ENCODE measurements at regions of chr5 and their contacts with region 1.

Region 1: GRCh38 chr5:159106569-159107282 is 7.0 kb upstream of the EBF1 start:
- DNase-seq: peak; percentile 40 to 73 (median 60)
- ATAC-seq: peak; percentile 80
- H3K4me3 ChIP-seq: peak overlapping the region; percentile 56
- H3K4me3 Mint-ChIP-seq: peak overlapping the region; percentile 76 to 95 (median 88)
- H3K27ac ChIP-seq: no peak overlapping the region
- H3K27ac Mint-ChIP-seq: peak overlapping the region in 2 of 9 donors; percentile 36 to 61
- H3K4me1 ChIP-seq: peaks cover 0 to 16% of the 10 kb centered on the region in 2 donors
- H3K4me1 Mint-ChIP-seq: peaks cover 8 to 28% (median 24%) of the 10 kb centered on the region in 7 donors
- H3K27me3 ChIP-seq: peaks cover 6 to 26% of the 10 kb centered on the region in 2 donors
- H3K27me3 Mint-ChIP-seq: peaks cover 48 to 80% (median 60%) of the 10 kb centered on the region in 5 donors

Region 2: DNA sequence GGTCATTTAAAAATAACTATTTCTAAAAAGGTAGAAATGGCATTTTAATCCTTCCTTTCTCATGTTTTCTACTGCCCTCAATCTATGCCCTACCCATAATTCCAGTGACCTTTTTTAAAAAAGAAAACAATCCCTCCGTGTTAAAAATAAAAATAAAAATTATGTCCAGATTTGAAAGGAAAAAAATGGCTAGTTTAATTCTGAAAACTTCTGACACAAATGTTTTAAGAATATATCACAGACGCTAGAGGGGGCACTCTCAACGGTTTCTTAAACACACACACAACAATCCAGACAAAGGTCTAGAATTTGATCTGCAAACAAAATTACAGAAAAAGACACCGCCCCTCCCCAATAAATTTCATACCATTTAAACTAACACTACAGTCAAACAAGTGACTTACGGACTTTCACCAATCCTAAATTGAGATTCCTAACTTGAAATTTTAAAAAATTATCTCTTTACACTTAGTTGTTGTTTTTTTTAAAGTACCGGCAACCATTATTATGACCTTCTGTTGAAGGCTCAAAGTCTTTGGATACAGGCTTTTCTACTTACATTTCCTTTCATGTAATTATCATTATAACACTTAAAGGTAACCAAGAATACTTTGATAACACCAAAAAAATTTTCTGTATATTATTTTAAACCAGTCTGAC is 1286.0 kb before region 1 on chr5:
- CTCF ChIA-PET with region 1: no interaction called
- POLR2A ChIA-PET with region 1: no interaction called
- intact Hi-C with region 1: loop called in 1 of 2 experiments (anchors 2 kb)
- DNase-seq: peak in 7 of 9 donors; percentile 5 to 45 (median 32)
- ATAC-seq: peak; percentile 55
- H3K4me3 ChIP-seq: no peak overlapping the region
- H3K4me3 Mint-ChIP-seq: no peak overlapping the region
- H3K27ac ChIP-seq: no peak overlapping the region
- H3K27ac Mint-ChIP-seq: peak overlapping the region in 6 of 9 donors; percentile 0 to 84 (median 40)
- H3K4me1 ChIP-seq: peaks cover 0 to 8% of the 10 kb centered on the region in 2 donors
- H3K4me1 Mint-ChIP-seq: peaks cover 15 to 52% (median 41%) of the 10 kb centered on the region in 7 donors
- H3K27me3 ChIP-seq: no peaks in the 10 kb centered on the region
- H3K27me3 Mint-ChIP-seq: no peaks in the 10 kb centered on the region

Region 3: GRCh38 chr5:157955541-157956172 is 1151.1 kb before region 1 on chr5:
- CTCF ChIA-PET with region 1: no interaction called
- POLR2A ChIA-PET with region 1: no interaction called
- intact Hi-C with region 1: loop called in 1 of 2 experiments (anchors 2 kb)
- DNase-seq: no peak
- ATAC-seq: no peak
- H3K4me3 ChIP-seq: no peak overlapping the region
- H3K4me3 Mint-ChIP-seq: no peak overlapping the region
- H3K27ac ChIP-seq: no peak overlapping the region
- H3K27ac Mint-ChIP-seq: peak overlapping the region in 1 of 9 donors; percentile 28
- H3K4me1 ChIP-seq: no peaks in the 10 kb centered on the region
- H3K4me1 Mint-ChIP-seq: peaks cover 0 to 3% (median 0%) of the 10 kb centered on the region in 7 donors
- H3K27me3 ChIP-seq: no peaks in the 10 kb centered on the region
- H3K27me3 Mint-ChIP-seq: peaks cover 4 to 27% (median 8%) of the 10 kb centered on the region in 5 donors

Region 4: GRCh38 chr5:158174918-158175851 is 931.5 kb before region 1 on chr5:
- CTCF ChIA-PET with region 1: interaction called, 38 read pairs
- POLR2A ChIA-PET with region 1: no interaction called
- intact Hi-C with region 1: loop called (anchors 1 kb)
- DNase-seq: peak; percentile 11 to 58 (median 46)
- ATAC-seq: peak; percentile 65
- H3K4me3 ChIP-seq: no peak overlapping the region
- H3K4me3 Mint-ChIP-seq: no peak overlapping the region
- H3K27ac ChIP-seq: no peak overlapping the region
- H3K27ac Mint-ChIP-seq: peak overlapping the region in 1 of 9 donors; percentile 41
- H3K4me1 ChIP-seq: no peaks in the 10 kb centered on the region
- H3K4me1 Mint-ChIP-seq: peaks cover 0 to 5% (median 0%) of the 10 kb centered on the region in 7 donors
- H3K27me3 ChIP-seq: no peaks in the 10 kb centered on the region
- H3K27me3 Mint-ChIP-seq: peaks cover 0 to 10% (median 4%) of the 10 kb centered on the region in 5 donors

Region 5: GRCh38 chr5:158695595-158696330 is 411.0 kb before region 1 on chr5:
- CTCF ChIA-PET with region 1: interaction called, 246 read pairs
- POLR2A ChIA-PET with region 1: interaction called, 23 read pairs
- intact Hi-C with region 1: loop called (anchors 1 kb)
- DNase-seq: peak; percentile 29 to 75 (median 60)
- ATAC-seq: peak; percentile 91
- H3K4me3 ChIP-seq: no peak overlapping the region
- H3K4me3 Mint-ChIP-seq: peak overlapping the region in 6 of 10 donors; percentile 8 to 57 (median 37)
- H3K27ac ChIP-seq: no peak overlapping the region
- H3K27ac Mint-ChIP-seq: no peak overlapping the region
- H3K4me1 ChIP-seq: no peaks in the 10 kb centered on the region
- H3K4me1 Mint-ChIP-seq: peaks cover 0 to 4% (median 2%) of the 10 kb centered on the region in 7 donors
- H3K27me3 ChIP-seq: no peaks in the 10 kb centered on the region
- H3K27me3 Mint-ChIP-seq: peaks cover 0 to 20% (median 0%) of the 10 kb centered on the region in 5 donors

Region 6: DNA sequence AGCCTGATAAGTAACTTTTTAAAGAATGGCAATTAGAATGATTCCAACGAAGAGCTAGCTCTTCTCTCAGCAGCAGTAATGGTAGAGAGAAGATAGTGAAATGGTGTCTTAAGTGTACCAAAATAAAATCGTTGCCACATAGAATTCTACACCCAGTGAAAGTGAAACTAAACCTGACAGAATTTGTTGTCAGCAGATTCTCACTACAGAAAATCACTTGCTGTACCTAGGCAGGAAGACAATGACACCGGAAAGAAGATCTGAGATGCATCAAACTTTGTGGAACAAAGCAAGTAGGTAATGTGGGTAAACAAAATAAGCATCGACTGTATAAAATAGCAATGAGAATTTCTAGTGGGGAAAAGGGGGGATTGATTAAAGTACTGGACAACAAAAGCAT is 13.7 kb after region 1 on chr5:
- CTCF ChIA-PET with region 1: interaction called, 10 read pairs
- POLR2A ChIA-PET with region 1: interaction called, 4 read pairs
- intact Hi-C with region 1: no loop called
- DNase-seq: peak in 7 of 9 donors; percentile 41 to 80 (median 71)
- ATAC-seq: peak; percentile 84
- H3K4me3 ChIP-seq: peak overlapping the region; percentile 6
- H3K4me3 Mint-ChIP-seq: peak overlapping the region; percentile 48 to 88 (median 72)
- H3K27ac ChIP-seq: peak overlapping the region; percentile 22
- H3K27ac Mint-ChIP-seq: peak overlapping the region; percentile 86 to 96 (median 93)
- H3K4me1 ChIP-seq: peaks cover 7 to 17% of the 10 kb centered on the region in 2 donors
- H3K4me1 Mint-ChIP-seq: peaks cover 9 to 26% (median 22%) of the 10 kb centered on the region in 7 donors
- H3K27me3 ChIP-seq: no peaks in the 10 kb centered on the region
- H3K27me3 Mint-ChIP-seq: peaks cover 0 to 14% (median 0%) of the 10 kb centered on the region in 5 donors